Panc1 (cell line): ENCODE measurements at regions of chr1 and their contacts with region 1.

Region 1: DNA sequence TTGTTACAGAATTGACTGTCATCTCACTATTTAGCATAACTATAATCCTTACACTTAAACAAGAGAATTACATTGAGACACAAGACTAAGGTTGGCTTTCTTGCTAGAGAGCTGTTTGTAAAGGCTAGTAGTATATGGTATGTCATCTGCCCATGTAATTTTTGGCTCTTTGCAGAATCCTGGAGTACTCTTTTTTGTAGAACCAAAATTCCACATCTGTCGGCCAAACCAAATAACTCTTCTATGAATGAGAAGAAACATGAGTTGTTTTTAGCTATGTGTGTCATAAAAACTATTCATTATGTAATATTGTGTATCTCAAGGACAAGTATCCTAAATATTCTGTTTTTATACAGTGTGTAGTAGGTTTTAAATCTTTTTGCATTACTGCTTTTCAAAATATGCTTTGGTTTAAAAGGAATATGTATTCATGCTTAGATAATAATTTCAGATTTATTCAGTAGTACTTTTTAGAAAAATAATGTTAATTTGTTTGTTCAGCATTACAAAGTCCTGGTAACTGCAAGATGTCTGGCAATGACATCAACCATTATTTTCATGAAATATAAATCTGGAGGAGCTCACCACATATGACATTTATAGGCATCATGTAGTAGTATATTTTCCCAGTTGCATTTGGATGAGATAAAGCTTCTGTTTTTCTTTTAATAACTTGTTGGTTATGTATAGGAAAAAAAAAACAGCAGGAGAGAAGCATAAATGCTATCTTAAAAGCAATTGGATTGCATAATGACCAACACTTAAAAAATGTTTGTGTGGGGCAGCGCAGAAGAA is 159.8 kb downstream of the HS2ST1 start:
- DNase-seq: no peak
- ATAC-seq: no peak
- H3K4me3 ChIP-seq: no peak overlapping the region
- H3K27ac ChIP-seq: no peak overlapping the region
- H3K4me1 ChIP-seq: no peaks in the 10 kb centered on the region
- H3K27me3 ChIP-seq: no peaks in the 10 kb centered on the region
- CTCF ChIP-seq: no peak

Region 2: GRCh38 chr1:87051965-87052364 is 22.2 kb before region 1 on chr1:
- CTCF ChIA-PET with region 1: no interaction called
- POLR2A ChIA-PET with region 1: interaction called, 10 read pairs
- in situ Hi-C with region 1: no loop called
- intact Hi-C with region 1: no loop called
- DNase-seq: no peak
- ATAC-seq: no peak
- H3K4me3 ChIP-seq: no peak overlapping the region
- H3K27ac ChIP-seq: no peak overlapping the region
- H3K4me1 ChIP-seq: no peaks in the 10 kb centered on the region
- H3K27me3 ChIP-seq: no peaks in the 10 kb centered on the region
- CTCF ChIP-seq: no peak